Naive thymus-derived CD4-positive, alpha-beta T cell (primary cell): ENCODE measurements at regions of chr5 and their contacts with region 1.

Region 1: DNA sequence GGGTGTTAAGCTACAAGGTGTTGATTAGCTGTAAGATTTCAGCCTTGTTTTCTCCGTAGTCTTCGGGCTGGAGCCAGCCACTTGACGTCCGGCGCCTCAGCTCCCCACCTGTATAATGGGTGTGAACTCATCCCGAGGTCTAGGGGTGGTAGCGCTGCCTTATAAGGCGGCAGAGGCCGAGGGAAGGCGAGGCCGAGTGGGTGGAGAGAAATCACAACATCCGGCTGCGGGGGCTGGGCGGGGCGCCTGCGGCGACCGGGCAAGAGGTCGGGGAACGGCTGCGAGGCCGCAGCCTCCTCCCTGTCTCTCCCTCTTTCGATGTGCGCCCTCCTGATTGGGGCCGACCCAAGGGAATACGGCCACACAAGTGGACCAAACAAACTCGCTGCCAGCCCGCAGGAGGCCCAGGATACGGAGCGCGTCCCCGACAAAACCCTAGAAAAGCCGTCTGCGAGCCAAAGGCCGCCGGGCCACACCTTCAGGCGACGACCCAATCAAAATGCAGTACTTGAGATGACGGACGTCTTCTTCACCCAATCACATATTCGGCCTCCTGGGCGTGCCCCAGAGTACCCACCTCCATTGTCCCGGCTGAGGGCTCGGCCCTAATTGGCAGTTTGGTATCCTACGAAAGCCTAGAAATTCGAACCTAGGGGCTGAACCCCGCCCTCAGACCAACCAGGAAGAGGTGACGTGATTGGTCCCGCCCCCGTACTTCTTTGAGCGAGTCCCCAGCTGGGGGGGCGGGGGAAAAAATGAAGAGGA is 493 bp upstream of the GRK6 start:
- DNase-seq: peak; percentile 89 to 100 (median 100)
- ATAC-seq: peak; percentile 89
- H3K4me3 ChIP-seq: peak overlapping the region; percentile 67
- H3K4me3 Mint-ChIP-seq: peak overlapping the region; percentile 87 to 96 (median 90)
- H3K27ac ChIP-seq: peak overlapping the region; percentile 82
- H3K27ac Mint-ChIP-seq: peak overlapping the region; percentile 92 to 98 (median 96)
- H3K4me1 ChIP-seq: peaks cover 27 to 36% of the 10 kb centered on the region in 2 donors
- H3K4me1 Mint-ChIP-seq: peaks cover 33 to 54% (median 38%) of the 10 kb centered on the region in 7 donors
- H3K27me3 ChIP-seq: no peaks in the 10 kb centered on the region
- H3K27me3 Mint-ChIP-seq: peaks cover 0 to 3% (median 0%) of the 10 kb centered on the region in 5 donors

Region 2: GRCh38 chr5:177133091-177133852 is 292.7 kb before region 1 on chr5 and contains the start of gene NSD1:
- CTCF ChIA-PET with region 1: no interaction called
- POLR2A ChIA-PET with region 1: interaction called, 3 read pairs
- intact Hi-C with region 1: loop called in 1 of 2 experiments (anchors 1 kb)
- DNase-seq: peak; percentile 86 to 94 (median 93)
- ATAC-seq: peak; percentile 89
- H3K4me3 ChIP-seq: peak within 1 kb of the TSS; percentile 61
- H3K4me3 Mint-ChIP-seq: peak within 1 kb of the TSS; percentile 60 to 88 (median 85)
- H3K27ac ChIP-seq: peak within 1 kb of the TSS; percentile 80
- H3K27ac Mint-ChIP-seq: peak within 1 kb of the TSS; percentile 48 to 95 (median 89)
- H3K4me1 ChIP-seq: peaks cover 47 to 57% of the 10 kb centered on the region in 2 donors
- H3K4me1 Mint-ChIP-seq: peaks cover 34 to 72% (median 65%) of the 10 kb centered on the region in 7 donors
- H3K27me3 ChIP-seq: no peaks in the 10 kb centered on the region
- H3K27me3 Mint-ChIP-seq: no peaks in the 10 kb centered on the region
- total RNA-seq, gene NSD1: 105 to 126 (median 117) TPM

Region 3: GRCh38 chr5:177357459-177358351 is 68.3 kb before region 1 on chr5 and contains the start of gene RGS14:
- CTCF ChIA-PET with region 1: no interaction called
- POLR2A ChIA-PET with region 1: interaction called, 5 read pairs
- intact Hi-C with region 1: loop called (anchors 1 to 2 kb)
- DNase-seq: peak; percentile 50 to 90 (median 87)
- ATAC-seq: peak; percentile 95
- H3K4me3 ChIP-seq: peak within 1 kb of the TSS; percentile 70
- H3K4me3 Mint-ChIP-seq: peak within 1 kb of the TSS; percentile 83 to 97 (median 92)
- H3K27ac ChIP-seq: peak within 1 kb of the TSS; percentile 87
- H3K27ac Mint-ChIP-seq: peak within 1 kb of the TSS; percentile 80 to 98 (median 94)
- H3K4me1 ChIP-seq: peaks cover 47 to 56% of the 10 kb centered on the region in 2 donors
- H3K4me1 Mint-ChIP-seq: peaks cover 64 to 86% (median 74%) of the 10 kb centered on the region in 7 donors
- H3K27me3 ChIP-seq: no peaks in the 10 kb centered on the region
- H3K27me3 Mint-ChIP-seq: no peaks in the 10 kb centered on the region
- total RNA-seq, gene RGS14: 68.4 to 196 (median 112) TPM

Region 4: GRCh38 chr5:177390363-177391300 is 35.4 kb before region 1 on chr5:
- CTCF ChIA-PET with region 1: interaction called, 4 read pairs
- POLR2A ChIA-PET with region 1: interaction called, 19 read pairs
- intact Hi-C with region 1: loop called (anchors 1 kb)
- DNase-seq: peak; percentile 76 to 91 (median 88)
- ATAC-seq: peak; percentile 89
- H3K4me3 ChIP-seq: no peak overlapping the region
- H3K4me3 Mint-ChIP-seq: peak overlapping the region in 9 of 10 donors; percentile 29 to 68 (median 53)
- H3K27ac ChIP-seq: peak overlapping the region; percentile 63
- H3K27ac Mint-ChIP-seq: peak overlapping the region in 8 of 9 donors; percentile 65 to 86 (median 78)
- H3K4me1 ChIP-seq: peaks cover 31 to 33% of the 10 kb centered on the region in 2 donors
- H3K4me1 Mint-ChIP-seq: peaks cover 30 to 39% (median 34%) of the 10 kb centered on the region in 7 donors
- H3K27me3 ChIP-seq: no peaks in the 10 kb centered on the region
- H3K27me3 Mint-ChIP-seq: peaks cover 0 to 6% (median 0%) of the 10 kb centered on the region in 5 donors

Region 5: GRCh38 chr5:177446200-177447065 is 20.4 kb after region 1 on chr5 and contains the start of gene PRR7:
- CTCF ChIA-PET with region 1: interaction called, 37 read pairs
- POLR2A ChIA-PET with region 1: interaction called, 804 read pairs
- intact Hi-C with region 1: loop called (anchors 1 kb)
- DNase-seq: peak; percentile 71 to 85 (median 81)
- ATAC-seq: peak; percentile 75
- H3K4me3 ChIP-seq: peak within 1 kb of the TSS; percentile 64
- H3K4me3 Mint-ChIP-seq: peak within 1 kb of the TSS; percentile 77 to 85 (median 82)
- H3K27ac ChIP-seq: peak within 1 kb of the TSS; percentile 97
- H3K27ac Mint-ChIP-seq: peak within 1 kb of the TSS; percentile 86 to 97 (median 92)
- H3K4me1 ChIP-seq: peaks cover 7 to 34% of the 10 kb centered on the region in 2 donors
- H3K4me1 Mint-ChIP-seq: peaks cover 31 to 52% (median 41%) of the 10 kb centered on the region in 7 donors
- H3K27me3 ChIP-seq: no peaks in the 10 kb centered on the region
- H3K27me3 Mint-ChIP-seq: peaks cover 0 to 10% (median 0%) of the 10 kb centered on the region in 5 donors
- total RNA-seq, gene PRR7: 6.4 to 31.8 (median 6.8) TPM

Region 6: DNA sequence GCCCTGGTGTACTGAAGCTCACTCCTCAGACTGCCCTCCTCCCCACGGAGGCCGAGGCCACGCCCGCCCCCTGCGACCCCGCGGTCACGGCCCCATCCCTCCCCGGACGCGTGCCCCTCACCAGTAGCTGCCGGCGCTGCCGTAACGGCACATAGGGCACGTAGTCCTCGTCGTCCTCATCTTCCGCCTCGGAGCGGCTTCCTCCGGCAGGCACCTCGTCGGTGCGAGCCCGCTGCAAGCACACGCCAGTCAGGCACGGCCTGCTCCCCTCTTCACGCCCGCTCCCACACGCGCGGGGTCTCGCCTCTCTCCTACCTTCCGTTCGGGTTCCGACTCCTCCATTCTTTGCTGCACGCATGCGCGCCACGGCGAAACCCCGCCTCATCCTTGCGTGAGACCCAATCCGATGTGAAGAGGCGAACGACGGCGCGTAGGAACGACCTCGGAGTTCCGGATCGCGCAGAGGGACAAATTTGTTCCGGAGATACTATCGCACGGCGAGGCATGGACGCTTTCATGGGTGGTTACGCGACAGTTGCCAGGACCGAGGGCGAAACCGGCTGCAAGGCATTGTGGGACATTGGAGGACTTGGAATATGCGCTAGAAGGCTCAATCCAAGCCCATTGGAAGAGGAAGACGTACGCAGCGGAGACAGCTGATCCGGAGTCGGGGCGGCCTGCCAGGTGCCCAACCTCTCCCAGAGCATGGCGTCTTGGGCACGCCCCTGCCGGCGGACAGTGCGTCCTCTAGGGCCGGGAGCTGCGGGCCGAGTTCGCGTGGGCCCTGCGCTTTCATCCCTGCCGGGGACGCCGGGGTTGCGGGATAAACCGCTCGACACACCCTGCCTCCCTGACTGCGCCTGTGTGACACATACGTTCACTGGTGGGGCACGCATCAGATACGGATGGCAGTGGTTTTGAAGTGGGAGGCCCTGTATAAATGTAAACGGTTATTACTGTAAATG is 90.9 kb after region 1 on chr5 and contains the start of gene DDX41:
- CTCF ChIA-PET with region 1: no interaction called
- POLR2A ChIA-PET with region 1: no interaction called
- intact Hi-C with region 1: loop called in 1 of 2 experiments (anchors 2 kb)
- DNase-seq: peak; percentile 88 to 96 (median 95)
- ATAC-seq: peak; percentile 92
- H3K4me3 ChIP-seq: peak within 1 kb of the TSS; percentile 76
- H3K4me3 Mint-ChIP-seq: peak within 1 kb of the TSS; percentile 92 to 99 (median 96)
- H3K27ac ChIP-seq: peak within 1 kb of the TSS; percentile 79
- H3K27ac Mint-ChIP-seq: peak within 1 kb of the TSS; percentile 85 to 97 (median 92)
- H3K4me1 ChIP-seq: peaks cover 15 to 17% of the 10 kb centered on the region in 2 donors
- H3K4me1 Mint-ChIP-seq: peaks cover 42 to 58% (median 52%) of the 10 kb centered on the region in 7 donors
- H3K27me3 ChIP-seq: no peaks in the 10 kb centered on the region
- H3K27me3 Mint-ChIP-seq: peaks cover 0 to 2% (median 0%) of the 10 kb centered on the region in 5 donors
- total RNA-seq, gene DDX41: 65.8 to 126 (median 76.1) TPM